Caki2 (cell line): ENCODE measurements at regions of chr3 and their contacts with region 1.

Region 1: GRCh38 chr3:42012935-42013690 is 51.2 kb upstream of the ULK4 start:
- DNase-seq: peak; percentile 45

Region 2: GRCh38 chr3:42080452-42080891 is 67.4 kb after region 1 on chr3:
- in situ Hi-C with region 1: loop called (anchors 5 kb)
- DNase-seq: peak; percentile 82

Region 3: DNA sequence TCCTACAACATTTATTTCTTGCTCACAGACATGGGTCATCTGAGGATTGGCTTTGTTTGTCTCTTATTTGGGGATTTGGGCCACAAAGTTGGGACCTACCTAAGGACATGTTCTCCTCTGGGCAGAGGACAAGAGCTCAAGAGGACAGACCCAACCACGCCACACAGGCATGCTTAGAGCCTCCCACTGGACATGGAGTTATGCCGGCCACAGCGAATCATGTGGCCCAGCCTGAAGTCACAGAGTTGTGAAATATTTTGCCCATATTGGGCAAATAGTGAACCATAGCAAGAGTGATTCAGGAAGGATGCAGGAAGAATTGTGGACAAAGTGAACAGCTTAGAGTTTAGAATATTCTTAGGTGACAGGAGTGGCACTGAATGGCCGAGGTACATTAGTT is 87.9 kb after region 1 on chr3:
- in situ Hi-C with region 1: no loop called
- DNase-seq: no peak

Region 4: GRCh38 chr3:42355612-42356011 is 342.5 kb after region 1 on chr3:
- in situ Hi-C with region 1: no loop called
- DNase-seq: no peak